CD14-positive monocyte (primary cell): ENCODE measurements at regions of chr17 and their contacts with region 1.

Region 1: GRCh38 chr17:5706577-5707216 is 122.4 kb upstream of the NLRP1 start:
- DNase-seq: peak; percentile 44 to 63 (median 63)
- H3K4me3 ChIP-seq: no peak overlapping the region
- H3K4me3 Mint-ChIP-seq: no peak overlapping the region
- H3K27ac ChIP-seq: no peak overlapping the region
- H3K27ac Mint-ChIP-seq: no peak overlapping the region
- H3K4me1 ChIP-seq: no peaks in the 10 kb centered on the region
- H3K4me1 Mint-ChIP-seq: no peaks in the 10 kb centered on the region
- H3K27me3 ChIP-seq: peaks cover 11 to 15% of the 10 kb centered on the region in 2 donors
- H3K27me3 Mint-ChIP-seq: peaks cover 7 to 23% (median 21%) of the 10 kb centered on the region in 3 donors
- CTCF ChIP-seq: peak; percentile 82

Region 2: DNA sequence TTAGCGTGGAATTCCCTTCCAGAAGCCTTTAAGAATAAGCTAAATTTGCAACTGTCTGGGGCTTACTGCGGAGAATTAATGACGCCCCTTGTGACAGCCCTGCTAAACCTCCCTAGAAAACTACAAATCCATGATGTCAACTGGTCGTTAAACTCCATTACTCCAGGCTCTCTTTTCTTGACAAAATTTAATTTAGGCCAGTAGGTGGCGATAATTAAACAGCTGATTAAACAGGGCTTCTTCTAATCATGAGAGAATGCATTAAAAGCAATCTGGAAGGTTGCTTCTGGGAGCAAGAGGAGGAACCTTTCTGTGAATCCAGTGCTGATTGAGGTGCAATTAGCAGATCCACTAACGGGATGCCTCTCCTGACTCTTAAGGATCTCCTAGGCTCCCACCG is 114.3 kb before region 1 on chr17:
- intact Hi-C with region 1: loop called (anchors 1 to 2 kb)
- DNase-seq: peak; percentile 25 to 59 (median 42)
- H3K4me3 ChIP-seq: no peak overlapping the region
- H3K4me3 Mint-ChIP-seq: no peak overlapping the region
- H3K27ac ChIP-seq: no peak overlapping the region
- H3K27ac Mint-ChIP-seq: no peak overlapping the region
- H3K4me1 ChIP-seq: peaks cover 0 to under 1% of the 10 kb centered on the region in 2 donors
- H3K4me1 Mint-ChIP-seq: peaks cover 6% of the 10 kb centered on the region
- H3K27me3 ChIP-seq: peaks cover 5 to 25% of the 10 kb centered on the region in 2 donors
- H3K27me3 Mint-ChIP-seq: peaks cover 20 to 52% (median 29%) of the 10 kb centered on the region in 3 donors
- CTCF ChIP-seq: peak; percentile 73

Region 3: DNA sequence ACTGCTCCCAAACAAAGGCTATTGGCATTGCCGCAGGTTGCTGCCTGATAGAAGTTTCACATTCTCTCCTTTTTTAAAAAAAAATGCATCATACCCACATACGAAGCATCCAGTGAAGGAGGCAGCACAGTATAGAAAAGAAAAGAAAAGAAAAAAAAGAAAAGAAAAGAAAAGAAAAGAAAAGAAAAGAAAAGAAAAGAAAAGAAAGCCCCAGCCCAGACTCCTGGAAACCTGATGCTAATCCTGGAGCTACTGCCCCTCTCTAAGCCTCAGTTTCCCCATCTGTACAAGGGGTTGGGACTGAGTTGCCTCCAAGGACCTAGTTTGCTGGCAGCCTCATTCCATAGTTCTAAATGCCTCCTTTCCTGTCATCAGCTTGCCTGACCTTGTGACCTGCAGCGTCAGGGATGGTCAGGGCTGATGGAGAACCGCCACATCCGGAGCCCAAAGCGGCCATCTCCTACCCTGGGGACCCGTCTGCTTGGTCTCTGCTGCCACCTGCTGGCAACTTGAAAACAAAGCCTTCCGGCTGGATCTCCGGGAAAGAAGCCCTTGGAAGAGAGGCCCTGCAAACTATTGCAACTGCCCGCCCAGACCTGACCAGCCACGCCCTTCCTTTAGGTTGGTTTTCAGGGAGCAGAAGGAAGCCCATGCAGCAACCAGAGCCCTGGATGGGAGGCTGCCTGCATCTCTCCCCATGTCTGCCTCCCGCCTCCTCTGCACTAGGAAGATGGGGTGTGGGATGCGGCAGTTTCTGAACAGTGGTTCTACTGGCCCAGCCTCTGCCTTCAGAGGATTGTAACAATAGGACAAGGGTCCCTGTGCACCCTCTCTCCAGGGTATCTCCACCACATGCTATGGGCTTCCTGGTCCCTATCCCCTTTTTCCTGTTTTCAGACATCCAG is 715.3 kb after region 1 on chr17:
- intact Hi-C with region 1: loop called in 1 of 2 experiments (anchors 10 kb)
- DNase-seq: peak; percentile 73 to 82 (median 77)
- H3K4me3 ChIP-seq: no peak overlapping the region
- H3K4me3 Mint-ChIP-seq: peak overlapping the region in 1 of 2 donors; percentile 67
- H3K27ac ChIP-seq: no peak overlapping the region
- H3K27ac Mint-ChIP-seq: no peak overlapping the region
- H3K4me1 ChIP-seq: peaks cover 0 to 3% of the 10 kb centered on the region in 2 donors
- H3K4me1 Mint-ChIP-seq: peaks cover 8% of the 10 kb centered on the region
- H3K27me3 ChIP-seq: peaks cover 0 to 58% of the 10 kb centered on the region in 2 donors
- H3K27me3 Mint-ChIP-seq: peaks cover 39 to 68% (median 43%) of the 10 kb centered on the region in 3 donors
- CTCF ChIP-seq: peak; percentile 86

Region 4: GRCh38 chr17:6435968-6436367 is 729.3 kb after region 1 on chr17:
- intact Hi-C with region 1: loop called in 1 of 2 experiments (anchors 10 kb)
- DNase-seq: peak; percentile 54 to 61 (median 54)
- H3K4me3 ChIP-seq: no peak overlapping the region
- H3K4me3 Mint-ChIP-seq: no peak overlapping the region
- H3K27ac ChIP-seq: no peak overlapping the region
- H3K27ac Mint-ChIP-seq: no peak overlapping the region
- H3K4me1 ChIP-seq: no peaks in the 10 kb centered on the region
- H3K4me1 Mint-ChIP-seq: peaks cover 11% of the 10 kb centered on the region
- H3K27me3 ChIP-seq: peaks cover 4 to 30% of the 10 kb centered on the region in 2 donors
- H3K27me3 Mint-ChIP-seq: peaks cover 36 to 59% (median 37%) of the 10 kb centered on the region in 3 donors
- CTCF ChIP-seq: peak; percentile 84